Heart left ventricle (tissue), 16 donors: ENCODE measurements at regions of chr9 and their contacts with region 1.

Region 1: GRCh38 chr9:13450723-13451122 is 171.2 kb upstream of the MPDZ start:
- DNase-seq: no peak
- ATAC-seq: peak in 1 of 4 donors; percentile 26
- H3K4me3 ChIP-seq: no peak overlapping the region
- H3K27ac ChIP-seq: no peak overlapping the region
- H3K4me1 ChIP-seq: peaks cover 0 to 47% (median 25%) of the 10 kb centered on the region in 12 donors
- H3K27me3 ChIP-seq: no peaks in the 10 kb centered on the region
- CTCF ChIP-seq: no peak
- POLR2A ChIP-seq: no peak

Region 2: GRCh38 chr9:13568841-13569601 is 118.3 kb after region 1 on chr9:
- intact Hi-C with region 1: loop called in 1 of 10 experiments (anchors 10 kb)
- DNase-seq: peak in 3 of 5 donors; percentile 30 to 55 (median 34)
- ATAC-seq: peak; percentile 25 to 49 (median 29)
- H3K4me3 ChIP-seq: peak overlapping the region in 10 of 12 donors; percentile 21 to 46 (median 35)
- H3K27ac ChIP-seq: peak overlapping the region; percentile 53 to 92 (median 82)
- H3K4me1 ChIP-seq: peaks cover 0 to 46% (median 31%) of the 10 kb centered on the region in 12 donors
- H3K27me3 ChIP-seq: no peaks in the 10 kb centered on the region
- CTCF ChIP-seq: no peak
- POLR2A ChIP-seq: no peak

Region 3: GRCh38 chr9:13588151-13589033 is 137.7 kb after region 1 on chr9:
- intact Hi-C with region 1: loop called in 2 of 10 experiments (anchors 5 kb)
- DNase-seq: peak in 1 of 5 donors; percentile 29
- ATAC-seq: peak; percentile 52 to 75 (median 64)
- H3K4me3 ChIP-seq: no peak overlapping the region
- H3K27ac ChIP-seq: peak overlapping the region in 11 of 12 donors; percentile 26 to 78 (median 60)
- H3K4me1 ChIP-seq: peaks cover 0 to 57% (median 23%) of the 10 kb centered on the region in 12 donors
- H3K27me3 ChIP-seq: no peaks in the 10 kb centered on the region
- CTCF ChIP-seq: no peak
- POLR2A ChIP-seq: no peak

Region 4: GRCh38 chr9:13845460-13845859 is 394.7 kb after region 1 on chr9:
- intact Hi-C with region 1: no loop called
- DNase-seq: no peak
- ATAC-seq: no peak
- H3K4me3 ChIP-seq: no peak overlapping the region
- H3K27ac ChIP-seq: no peak overlapping the region
- H3K4me1 ChIP-seq: peaks cover 0 to 20% (median 0%) of the 10 kb centered on the region in 12 donors
- H3K27me3 ChIP-seq: no peaks in the 10 kb centered on the region
- CTCF ChIP-seq: no peak
- POLR2A ChIP-seq: no peak

Region 5: GRCh38 chr9:13898957-13899356 is 448.2 kb after region 1 on chr9:
- intact Hi-C with region 1: loop called in 1 of 10 experiments (anchors 5 kb)
- DNase-seq: peak in 4 of 5 donors; percentile 30 to 44 (median 36)
- ATAC-seq: no peak
- H3K4me3 ChIP-seq: no peak overlapping the region
- H3K27ac ChIP-seq: peak overlapping the region in 11 of 12 donors; percentile 42 to 84 (median 66)
- H3K4me1 ChIP-seq: peaks cover 6 to 66% (median 24%) of the 10 kb centered on the region in 12 donors
- H3K27me3 ChIP-seq: no peaks in the 10 kb centered on the region
- CTCF ChIP-seq: no peak
- POLR2A ChIP-seq: no peak

Region 6: GRCh38 chr9:14018081-14018480 is 567.4 kb after region 1 on chr9:
- intact Hi-C with region 1: loop called in 2 of 10 experiments (anchors 10 kb)
- DNase-seq: no peak
- ATAC-seq: no peak
- H3K4me3 ChIP-seq: no peak overlapping the region
- H3K27ac ChIP-seq: peak overlapping the region in 5 of 12 donors; percentile 6 to 28 (median 11)
- H3K4me1 ChIP-seq: peaks cover 0 to 36% (median 9%) of the 10 kb centered on the region in 12 donors
- H3K27me3 ChIP-seq: no peaks in the 10 kb centered on the region
- CTCF ChIP-seq: no peak
- POLR2A ChIP-seq: no peak

Region 7: GRCh38 chr9:14107977-14108376 is 657.3 kb after region 1 on chr9:
- intact Hi-C with region 1: loop called in 1 of 10 experiments (anchors 10 kb)
- DNase-seq: no peak
- ATAC-seq: peak; percentile 77 to 95 (median 94)
- H3K4me3 ChIP-seq: no peak overlapping the region
- H3K27ac ChIP-seq: peak overlapping the region in 9 of 12 donors; percentile 18 to 68 (median 39)
- H3K4me1 ChIP-seq: peaks cover 0 to 51% (median 7%) of the 10 kb centered on the region in 12 donors
- H3K27me3 ChIP-seq: no peaks in the 10 kb centered on the region
- CTCF ChIP-seq: no peak
- POLR2A ChIP-seq: no peak